IMR-90 (cell line): ENCODE measurements at regions of chr10 and their contacts with region 1.

Region 1: DNA sequence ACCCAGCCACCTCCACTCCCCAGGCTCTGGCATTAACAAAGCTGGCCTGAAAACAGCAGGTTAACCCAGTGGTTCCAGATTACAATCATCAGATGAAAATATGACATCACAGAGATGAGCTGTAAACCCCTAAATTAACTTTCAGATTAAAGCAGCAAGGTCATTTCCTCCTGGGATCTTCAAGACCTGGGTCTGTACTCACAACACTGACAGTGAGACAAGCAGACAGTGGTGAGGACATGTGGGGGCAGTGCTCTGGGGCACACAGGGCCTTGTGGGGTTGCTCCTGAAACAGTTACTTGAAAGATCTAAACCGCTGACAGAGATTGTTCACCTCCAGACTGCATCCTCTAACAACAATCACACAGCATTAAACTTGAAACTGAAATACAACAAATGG is 134.1 kb downstream of the ZNF438 start:
- DNase-seq: no peak
- ATAC-seq: no peak
- H3K4me3 ChIP-seq: no peak overlapping the region
- H3K27ac ChIP-seq: no peak overlapping the region
- H3K4me1 ChIP-seq: peaks cover 2% of the 10 kb centered on the region; the same call in 1 of the 2 replicates
- H3K27me3 ChIP-seq: no peaks in the 10 kb centered on the region
- CTCF ChIP-seq: no peak
- POLR2A ChIP-seq: no peak
- RAD21 ChIP-seq: no peak

Region 2: DNA sequence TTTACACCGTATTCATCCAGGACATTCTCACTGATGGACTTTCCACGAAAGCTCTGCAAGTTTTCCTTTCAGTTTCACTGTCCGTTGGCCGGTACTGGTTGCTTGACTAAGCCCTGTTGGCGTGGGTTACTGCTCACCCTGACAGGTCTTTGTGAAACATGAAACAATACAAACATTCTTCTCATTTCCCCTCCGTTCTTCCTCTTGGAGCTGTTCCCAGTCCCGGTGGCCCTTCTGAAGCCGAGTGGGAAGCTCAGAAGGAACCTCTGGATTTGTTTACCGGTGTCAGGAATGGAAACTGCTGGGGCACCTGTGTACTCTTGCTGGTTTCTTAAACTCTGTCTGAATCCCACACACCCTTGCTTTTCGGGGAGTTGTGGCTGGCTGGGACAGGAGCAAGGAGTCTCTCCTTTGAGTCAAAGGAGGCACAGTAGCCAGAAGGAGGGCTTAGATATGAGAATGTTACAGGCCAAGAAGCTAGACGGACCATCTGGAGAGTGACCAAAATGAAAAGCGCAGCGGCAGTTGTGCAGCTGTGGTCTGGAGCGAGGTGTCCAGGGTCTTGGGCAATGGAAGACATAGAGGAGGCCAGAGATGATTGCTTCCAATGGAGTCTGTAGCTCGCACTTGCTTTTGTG is 313.6 kb before region 1 on chr10:
- CTCF ChIA-PET with region 1: no interaction called
- POLR2A ChIA-PET with region 1: no interaction called
- dilution Hi-C with region 1: no loop called
- in situ Hi-C with region 1: no loop called
- intact Hi-C with region 1: no loop called
- DNase-seq: peak; percentile 77
- ATAC-seq: peak; percentile 88
- H3K4me3 ChIP-seq: peak overlapping the region; percentile 28; the same call in 1 of the 2 replicates
- H3K27ac ChIP-seq: no peak overlapping the region
- H3K4me1 ChIP-seq: peaks cover 2% of the 10 kb centered on the region; the same call in 1 of the 2 replicates
- H3K27me3 ChIP-seq: peaks cover 14% of the 10 kb centered on the region
- CTCF ChIP-seq: no peak
- POLR2A ChIP-seq: no peak
- RAD21 ChIP-seq: no peak

Region 3: GRCh38 chr10:30963992-30964930 is 66.7 kb after region 1 on chr10:
- CTCF ChIA-PET with region 1: no interaction called
- POLR2A ChIA-PET with region 1: no interaction called
- dilution Hi-C with region 1: no loop called
- in situ Hi-C with region 1: no loop called
- intact Hi-C with region 1: loop called (anchors 5 kb)
- DNase-seq: no peak
- ATAC-seq: no peak
- H3K4me3 ChIP-seq: no peak overlapping the region
- H3K27ac ChIP-seq: no peak overlapping the region
- H3K4me1 ChIP-seq: peaks cover 6% of the 10 kb centered on the region
- H3K27me3 ChIP-seq: no peaks in the 10 kb centered on the region
- CTCF ChIP-seq: no peak
- POLR2A ChIP-seq: no peak
- RAD21 ChIP-seq: no peak